ENCODE measurements at regions of chr4 and their contacts with region 1.

Region 1: DNA sequence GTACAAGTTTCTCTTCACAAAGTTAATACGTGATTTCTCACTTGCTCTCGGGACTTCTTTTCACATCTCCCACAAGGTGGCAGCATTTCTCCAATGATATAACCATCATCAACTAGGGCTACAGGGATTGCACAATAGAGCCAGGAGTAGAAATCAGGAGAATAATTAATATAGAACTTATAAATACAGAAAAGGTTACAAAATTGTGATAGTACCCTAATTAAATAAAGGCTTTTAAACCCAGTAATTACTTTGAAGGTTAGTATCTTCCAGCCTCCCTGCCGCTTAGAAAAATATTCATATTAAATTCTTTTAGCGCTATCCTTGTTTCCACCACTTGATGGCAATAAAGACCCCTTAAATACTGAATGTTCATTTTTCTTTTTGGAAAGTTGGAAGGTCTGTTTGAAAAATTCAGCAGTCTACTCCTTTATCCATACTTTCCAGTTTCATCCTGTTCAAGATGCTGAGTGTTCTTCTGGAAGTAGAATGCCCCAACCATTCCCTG is 65.8 kb downstream of the RASGEF1B start:
- DNase-seq: peak; percentile 69 to 84 (median 78)
- H3K4me3 ChIP-seq: peak overlapping the region in 1 of 3 experiments; percentile 31
- H3K4me3 Mint-ChIP-seq: no peak overlapping the region
- H3K27ac ChIP-seq: no peak overlapping the region
- H3K27ac Mint-ChIP-seq: peak overlapping the region in 1 of 7 donors; percentile 5
- H3K4me1 ChIP-seq: peaks cover 0 to 10% of the 10 kb centered on the region in 2 donors
- H3K4me1 Mint-ChIP-seq: peaks cover 15% of the 10 kb centered on the region
- H3K27me3 ChIP-seq: no peaks in the 10 kb centered on the region
- H3K27me3 Mint-ChIP-seq: peaks cover 2 to 8% (median 7%) of the 10 kb centered on the region in 3 donors
- CTCF ChIP-seq: peak; percentile 99

Region 2: DNA sequence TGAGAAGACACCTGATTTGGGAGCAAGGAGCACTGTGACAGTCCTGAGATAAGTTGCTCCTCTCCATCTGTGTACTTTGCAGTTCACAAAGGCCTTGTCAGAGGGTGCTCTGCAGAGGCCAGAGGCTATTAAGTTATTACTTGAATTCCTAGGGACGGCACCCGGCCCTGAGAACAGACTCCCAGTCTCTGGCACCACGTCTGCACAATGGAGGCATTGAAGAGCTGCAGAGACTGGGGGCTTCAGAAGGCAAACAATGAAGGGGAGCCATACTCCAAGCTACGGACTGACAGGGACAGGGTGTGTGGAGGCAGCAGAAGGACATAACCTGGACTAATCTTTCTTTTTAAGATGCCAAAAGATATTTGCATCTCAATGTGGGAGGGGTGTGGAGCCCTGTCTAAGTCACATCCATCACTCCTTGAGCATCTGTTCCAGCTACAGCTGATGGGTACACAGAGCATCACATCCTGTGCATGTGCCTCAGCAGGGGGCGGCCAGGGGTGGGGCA is 54.3 kb after region 1 on chr4:
- intact Hi-C with region 1: loop called (anchors 5 kb)
- DNase-seq: no peak
- H3K4me3 ChIP-seq: no peak overlapping the region
- H3K4me3 Mint-ChIP-seq: no peak overlapping the region
- H3K27ac ChIP-seq: no peak overlapping the region
- H3K27ac Mint-ChIP-seq: peak overlapping the region in 1 of 7 donors; percentile 23
- H3K4me1 ChIP-seq: peaks cover 3 to 5% of the 10 kb centered on the region in 2 donors
- H3K4me1 Mint-ChIP-seq: peaks cover 8% of the 10 kb centered on the region
- H3K27me3 ChIP-seq: no peaks in the 10 kb centered on the region
- H3K27me3 Mint-ChIP-seq: peaks cover 0 to 3% (median 0%) of the 10 kb centered on the region in 3 donors
- CTCF ChIP-seq: no peak

Region 3: DNA sequence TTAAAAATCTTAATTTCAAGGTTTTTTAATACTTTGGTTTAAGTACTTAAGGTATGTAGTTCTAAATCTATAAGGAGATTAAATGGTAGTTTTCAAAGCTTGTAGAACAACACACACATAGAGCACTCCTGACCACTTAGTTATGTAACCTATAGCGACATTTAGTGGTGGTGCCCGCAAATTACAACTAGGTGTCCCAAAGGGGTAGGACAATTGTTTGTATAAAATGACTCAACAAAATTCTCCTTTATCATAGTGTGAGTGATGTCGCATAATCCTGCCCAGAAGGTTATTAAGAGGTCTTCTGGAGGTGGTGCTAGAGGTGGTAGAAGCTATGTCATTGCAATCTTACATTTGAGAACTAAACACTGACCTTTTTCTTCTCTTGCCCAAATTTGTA is 438.8 kb after region 1 on chr4:
- intact Hi-C with region 1: loop called (anchors 2 to 5 kb)
- DNase-seq: peak; percentile 75 to 84 (median 77)
- H3K4me3 ChIP-seq: no peak overlapping the region
- H3K4me3 Mint-ChIP-seq: no peak overlapping the region
- H3K27ac ChIP-seq: no peak overlapping the region
- H3K27ac Mint-ChIP-seq: no peak overlapping the region
- H3K4me1 ChIP-seq: no peaks in the 10 kb centered on the region
- H3K4me1 Mint-ChIP-seq: no peaks in the 10 kb centered on the region
- H3K27me3 ChIP-seq: no peaks in the 10 kb centered on the region
- H3K27me3 Mint-ChIP-seq: peaks cover 0 to 4% (median 2%) of the 10 kb centered on the region in 3 donors
- CTCF ChIP-seq: peak; percentile 73

Region 4: GRCh38 chr4:82201805-82202641 is 796.1 kb after region 1 on chr4:
- intact Hi-C with region 1: loop called (anchors 5 kb)
- DNase-seq: peak; percentile 14 to 58 (median 44)
- H3K4me3 ChIP-seq: no peak overlapping the region
- H3K4me3 Mint-ChIP-seq: no peak overlapping the region
- H3K27ac ChIP-seq: no peak overlapping the region
- H3K27ac Mint-ChIP-seq: peak overlapping the region in 1 of 7 donors; percentile 66
- H3K4me1 ChIP-seq: no peaks in the 10 kb centered on the region
- H3K4me1 Mint-ChIP-seq: no peaks in the 10 kb centered on the region
- H3K27me3 ChIP-seq: no peaks in the 10 kb centered on the region
- H3K27me3 Mint-ChIP-seq: peaks cover 0 to 1% (median 0%) of the 10 kb centered on the region in 3 donors
- CTCF ChIP-seq: peak; percentile 76

Region 5: GRCh38 chr4:82268050-82268825 is 862.3 kb after region 1 on chr4:
- intact Hi-C with region 1: loop called (anchors 10 kb)
- DNase-seq: peak; percentile 70 to 89 (median 82)
- H3K4me3 ChIP-seq: peak overlapping the region; percentile 21 to 62 (median 44)
- H3K4me3 Mint-ChIP-seq: peak overlapping the region; percentile 49 to 81
- H3K27ac ChIP-seq: peak overlapping the region; percentile 59 to 78
- H3K27ac Mint-ChIP-seq: peak overlapping the region; percentile 72 to 96 (median 90)
- H3K4me1 ChIP-seq: peaks cover 20 to 21% of the 10 kb centered on the region in 2 donors
- H3K4me1 Mint-ChIP-seq: peaks cover 25% of the 10 kb centered on the region
- H3K27me3 ChIP-seq: no peaks in the 10 kb centered on the region
- H3K27me3 Mint-ChIP-seq: peaks cover 2 to 5% (median 4%) of the 10 kb centered on the region in 3 donors
- CTCF ChIP-seq: peak; percentile 82

Region 6: GRCh38 chr4:82373816-82374625 is 968.1 kb after region 1 on chr4 and contains the start of gene HNRNPD:
- intact Hi-C with region 1: loop called (anchors 10 kb)
- DNase-seq: peak; percentile 94 to 98 (median 98)
- H3K4me3 ChIP-seq: peak within 1 kb of the TSS; percentile 70 to 100 (median 98)
- H3K4me3 Mint-ChIP-seq: peak within 1 kb of the TSS; percentile 97 to 98
- H3K27ac ChIP-seq: peak within 1 kb of the TSS; percentile 96 to 100
- H3K27ac Mint-ChIP-seq: peak within 1 kb of the TSS; percentile 97 to 100 (median 99)
- H3K4me1 ChIP-seq: peaks cover 37 to 54% of the 10 kb centered on the region in 2 donors
- H3K4me1 Mint-ChIP-seq: peaks cover 50% of the 10 kb centered on the region
- H3K27me3 ChIP-seq: no peaks in the 10 kb centered on the region
- H3K27me3 Mint-ChIP-seq: no peaks in the 10 kb centered on the region
- CTCF ChIP-seq: no peak
- polyA plus RNA-seq, gene HNRNPD: 97.6 to 174 (median 149) TPM